ENCODE measurements at regions of chr6 and their contacts with region 1.

Region 1: DNA sequence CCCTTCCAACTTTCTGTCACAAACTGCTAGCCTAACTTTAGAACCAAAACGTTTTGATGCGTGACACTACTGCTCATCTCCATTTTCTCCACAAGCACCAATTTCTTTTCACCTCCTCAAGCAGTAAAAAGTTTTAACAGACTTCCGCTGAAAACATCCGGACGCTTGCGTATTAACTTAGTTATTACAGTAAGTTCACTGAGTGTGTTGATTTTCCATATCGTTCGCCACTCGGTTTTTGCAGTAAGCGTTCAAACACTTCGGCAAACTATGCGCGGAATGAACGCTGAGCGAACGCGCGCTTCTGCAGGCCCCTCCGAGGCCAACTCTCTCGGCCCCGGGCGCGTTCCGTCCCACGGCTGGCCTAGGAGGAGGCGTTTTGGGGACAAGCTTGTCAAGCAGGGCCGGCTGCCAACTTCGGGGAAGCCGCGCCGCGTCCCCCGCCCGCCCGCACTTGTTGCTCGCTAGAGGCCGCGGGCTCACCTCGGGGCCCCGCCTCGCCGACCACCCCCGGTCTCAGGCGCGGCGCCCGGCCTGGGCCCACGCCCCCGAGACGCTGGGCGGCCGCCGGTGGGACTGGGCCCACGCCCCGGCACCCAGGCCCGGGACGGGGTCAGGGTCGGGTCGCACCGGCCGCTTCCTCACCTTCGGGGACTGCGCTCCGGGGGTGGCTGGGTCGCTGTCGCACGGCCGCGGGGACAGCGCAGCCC is 945 bp downstream of the PHF10 start:
- DNase-seq: peak; percentile 59 to 84 (median 71)
- ATAC-seq: peak; percentile 41
- H3K4me3 Mint-ChIP-seq: peak overlapping the region; percentile 90 to 97 (median 94)
- H3K27ac Mint-ChIP-seq: peak overlapping the region; percentile 95 to 99 (median 97)
- H3K4me1 Mint-ChIP-seq: peaks cover 14 to 53% (median 41%) of the 10 kb centered on the region in 4 donors
- H3K27me3 Mint-ChIP-seq: no peaks in the 10 kb centered on the region

Region 2: DNA sequence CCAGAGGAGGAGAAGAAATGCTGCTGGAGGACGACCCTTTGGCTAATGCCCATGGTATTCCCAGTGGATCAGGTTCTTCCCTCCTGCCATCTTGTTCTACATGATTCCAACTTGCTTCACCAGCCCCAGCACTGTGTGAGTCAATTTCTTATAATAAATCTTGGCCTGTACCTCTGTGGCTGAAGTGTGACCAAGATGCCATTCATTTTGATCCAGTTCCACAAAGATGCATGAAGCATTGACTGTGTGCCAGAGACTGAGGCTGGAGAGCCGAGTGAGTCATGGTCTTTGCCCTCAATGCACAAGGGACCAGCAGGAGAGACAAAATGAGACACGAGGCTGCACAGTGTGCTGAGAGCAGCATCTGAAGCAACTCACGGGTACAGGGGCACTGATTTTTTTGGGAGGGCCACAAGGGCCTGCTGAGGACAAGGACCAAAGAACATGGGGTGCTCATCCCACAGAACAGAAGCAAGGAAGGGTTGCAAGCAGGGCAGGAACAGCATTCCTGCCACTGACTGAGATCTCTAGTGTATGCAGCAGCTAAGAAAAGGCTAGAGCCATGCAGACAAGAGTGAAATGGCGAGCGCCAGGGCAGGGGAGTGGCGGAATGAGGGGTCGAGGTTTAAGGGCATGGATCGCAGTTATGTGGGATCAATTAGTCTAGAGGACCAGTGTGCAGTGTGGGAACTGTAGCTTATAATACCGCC is 676.7 kb before region 1 on chr6:
- POLR2A ChIA-PET with region 1: no interaction called
- DNase-seq: no peak
- ATAC-seq: no peak
- H3K4me3 Mint-ChIP-seq: no peak overlapping the region
- H3K27ac Mint-ChIP-seq: peak overlapping the region in 1 of 10 donors; percentile 5
- H3K4me1 Mint-ChIP-seq: peaks cover 0 to 2% (median 0%) of the 10 kb centered on the region in 4 donors
- H3K27me3 Mint-ChIP-seq: peaks cover 2 to 18% (median 10%) of the 10 kb centered on the region in 5 donors

Region 3: DNA sequence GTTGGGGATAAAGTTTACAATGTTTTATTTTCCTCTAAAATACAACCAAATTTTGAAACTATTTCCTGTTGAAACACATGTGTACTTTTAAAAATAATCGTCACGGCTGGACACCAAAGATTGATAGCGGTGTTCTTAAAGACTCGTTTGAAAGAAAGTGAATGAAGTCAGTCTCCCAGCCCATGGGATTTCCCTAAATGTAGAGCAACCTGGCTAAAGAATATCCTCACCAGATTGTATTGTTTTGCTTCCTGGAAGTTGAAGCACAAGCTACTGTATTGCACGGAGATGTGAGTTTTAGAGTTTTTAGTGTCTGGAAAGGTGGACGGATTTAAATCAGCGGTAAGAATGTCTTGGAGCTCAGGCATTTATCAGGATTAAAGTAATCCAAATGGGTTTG is 659.2 kb before region 1 on chr6:
- POLR2A ChIA-PET with region 1: no interaction called
- DNase-seq: no peak
- ATAC-seq: no peak
- H3K4me3 Mint-ChIP-seq: no peak overlapping the region
- H3K27ac Mint-ChIP-seq: no peak overlapping the region
- H3K4me1 Mint-ChIP-seq: no peaks in the 10 kb centered on the region
- H3K27me3 Mint-ChIP-seq: peaks cover 2 to 24% (median 12%) of the 10 kb centered on the region in 5 donors

Region 4: DNA sequence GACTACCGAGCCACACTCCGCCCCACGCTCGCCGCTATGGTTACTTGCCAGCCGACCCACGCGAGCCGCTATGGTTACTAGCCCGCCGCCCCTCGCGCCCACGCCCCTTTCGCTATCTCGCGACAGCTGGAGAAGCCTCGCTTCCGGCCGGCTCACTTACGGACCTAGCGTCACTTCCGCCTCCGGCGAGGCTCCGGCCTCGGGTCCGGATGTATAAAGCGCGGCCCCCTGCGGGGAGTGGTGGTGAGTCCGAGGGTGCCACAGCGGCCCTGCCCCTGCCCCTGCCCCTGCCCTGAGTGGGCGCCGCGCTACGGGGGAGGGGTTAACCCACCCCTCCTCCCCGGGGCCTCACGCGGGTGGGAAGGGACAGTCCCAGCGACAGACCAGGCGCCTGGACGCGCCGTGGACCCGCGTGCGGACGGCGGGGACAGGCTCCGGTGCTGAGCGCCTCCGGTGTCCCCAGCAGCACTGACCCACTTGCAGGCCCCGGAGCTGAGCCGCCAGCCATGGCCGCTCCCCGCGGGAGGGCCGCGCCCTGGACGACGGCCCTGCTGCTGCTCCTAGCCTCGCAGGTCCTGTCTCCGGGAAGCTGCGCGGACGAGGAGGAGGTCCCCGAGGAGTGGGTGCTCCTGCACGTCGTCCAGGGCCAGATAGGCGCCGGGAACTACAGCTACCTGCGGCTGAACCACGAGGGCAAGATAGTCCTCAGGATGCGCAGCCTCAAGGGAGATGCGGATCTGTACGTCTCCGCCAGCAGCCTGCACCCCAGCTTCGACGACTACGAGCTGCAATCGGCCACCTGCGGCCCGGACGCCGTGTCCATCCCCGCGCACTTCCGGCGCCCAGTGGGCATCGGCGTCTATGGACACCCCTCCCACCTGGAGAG is 21.2 kb before region 1 on chr6 and contains the starts of genes C6orf120 and WDR27:
- POLR2A ChIA-PET with region 1: interaction called, 129 read pairs
- DNase-seq: peak; percentile 93 to 98 (median 96)
- ATAC-seq: peak; percentile 88
- H3K4me3 Mint-ChIP-seq: peak within 1 kb of the TSS; percentile 87 to 94 (median 91)
- H3K27ac Mint-ChIP-seq: peak within 1 kb of the TSS; percentile 89 to 97 (median 94)
- H3K4me1 Mint-ChIP-seq: peaks cover 19 to 75% (median 59%) of the 10 kb centered on the region in 4 donors
- H3K27me3 Mint-ChIP-seq: no peaks in the 10 kb centered on the region
- polyA plus RNA-seq, gene C6orf120: 7.9 to 10.1 (median 8.1) TPM
- polyA plus RNA-seq, gene WDR27: 3.7 to 7.3 (median 6.4) TPM

Region 5: GRCh38 chr6:169709293-169709692 is 14.1 kb before region 1 on chr6:
- POLR2A ChIA-PET with region 1: interaction called, 129 read pairs
- DNase-seq: no peak
- ATAC-seq: no peak
- H3K4me3 Mint-ChIP-seq: no peak overlapping the region
- H3K27ac Mint-ChIP-seq: peak overlapping the region in 1 of 10 donors; percentile 44
- H3K4me1 Mint-ChIP-seq: peaks cover 11 to 43% (median 32%) of the 10 kb centered on the region in 4 donors
- H3K27me3 Mint-ChIP-seq: no peaks in the 10 kb centered on the region

Region 6: GRCh38 chr6:169751242-169752073 is 28.1 kb after region 1 on chr6 and contains the starts of genes DYNLT2 and ERMARD:
- POLR2A ChIA-PET with region 1: interaction called, 112 read pairs
- DNase-seq: peak; percentile 89 to 95 (median 94)
- ATAC-seq: peak; percentile 94
- H3K4me3 Mint-ChIP-seq: peak within 1 kb of the TSS; percentile 96 to 100 (median 98)
- H3K27ac Mint-ChIP-seq: peak within 1 kb of the TSS; percentile 98 to 100 (median 100)
- H3K4me1 Mint-ChIP-seq: peaks cover 16 to 41% (median 37%) of the 10 kb centered on the region in 4 donors
- H3K27me3 Mint-ChIP-seq: no peaks in the 10 kb centered on the region
- polyA plus RNA-seq, gene DYNLT2: 0.35 to 0.67 (median 0.63) TPM
- polyA plus RNA-seq, gene ERMARD: 9.2 to 12.4 (median 9.2) TPM

Region 7: DNA sequence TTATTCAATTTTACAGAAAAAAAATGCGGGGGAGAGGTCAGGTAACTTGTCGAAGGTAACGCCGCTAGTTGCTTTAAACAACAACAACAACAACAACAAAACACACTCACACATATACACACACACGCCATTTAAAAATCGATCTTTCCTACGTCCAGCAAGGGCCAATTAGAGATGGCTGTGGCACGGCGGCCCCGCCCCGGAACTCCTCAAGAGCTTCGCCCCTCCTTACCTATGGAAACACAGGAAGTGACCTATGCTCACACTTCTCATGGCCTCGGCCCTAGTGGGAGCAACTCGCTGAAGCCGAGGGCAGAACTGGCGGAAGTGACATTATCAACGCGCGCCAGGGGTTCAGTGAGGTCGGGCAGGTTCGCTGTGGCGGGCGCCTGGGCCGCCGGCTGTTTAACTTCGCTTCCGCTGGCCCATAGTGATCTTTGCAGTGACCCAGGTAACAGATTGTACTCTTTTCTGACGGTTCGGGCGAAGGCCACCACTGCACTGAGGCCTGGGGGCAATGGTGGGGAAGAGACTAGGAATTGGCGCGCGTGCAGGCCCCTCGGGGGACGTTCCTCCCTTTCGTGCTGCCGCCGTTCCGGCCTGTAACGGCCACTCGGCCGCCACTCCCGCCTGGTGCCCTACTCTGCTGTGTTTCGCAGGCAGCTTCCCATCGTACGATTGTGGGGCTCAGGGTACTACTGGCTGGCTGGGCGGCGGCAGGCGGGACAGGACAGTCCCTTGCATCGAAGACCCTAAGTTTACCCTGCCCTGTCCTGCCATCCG is 830.8 kb after region 1 on chr6 and contains the start of gene TBP:
- POLR2A ChIA-PET with region 1: interaction called, 34 read pairs
- DNase-seq: peak; percentile 87 to 99 (median 97)
- ATAC-seq: peak; percentile 88 to 90
- H3K4me3 Mint-ChIP-seq: no peak within 1 kb of the TSS
- H3K27ac Mint-ChIP-seq: no peak within 1 kb of the TSS
- H3K4me1 Mint-ChIP-seq: peaks cover 20 to 45% (median 25%) of the 10 kb centered on the region in 4 donors
- H3K27me3 Mint-ChIP-seq: no peaks in the 10 kb centered on the region
- polyA plus RNA-seq, gene TBP: 13.8 to 25.6 (median 17.1) TPM